ENCODE measurements at regions of chr7 and their contacts with region 1.

Region 1: DNA sequence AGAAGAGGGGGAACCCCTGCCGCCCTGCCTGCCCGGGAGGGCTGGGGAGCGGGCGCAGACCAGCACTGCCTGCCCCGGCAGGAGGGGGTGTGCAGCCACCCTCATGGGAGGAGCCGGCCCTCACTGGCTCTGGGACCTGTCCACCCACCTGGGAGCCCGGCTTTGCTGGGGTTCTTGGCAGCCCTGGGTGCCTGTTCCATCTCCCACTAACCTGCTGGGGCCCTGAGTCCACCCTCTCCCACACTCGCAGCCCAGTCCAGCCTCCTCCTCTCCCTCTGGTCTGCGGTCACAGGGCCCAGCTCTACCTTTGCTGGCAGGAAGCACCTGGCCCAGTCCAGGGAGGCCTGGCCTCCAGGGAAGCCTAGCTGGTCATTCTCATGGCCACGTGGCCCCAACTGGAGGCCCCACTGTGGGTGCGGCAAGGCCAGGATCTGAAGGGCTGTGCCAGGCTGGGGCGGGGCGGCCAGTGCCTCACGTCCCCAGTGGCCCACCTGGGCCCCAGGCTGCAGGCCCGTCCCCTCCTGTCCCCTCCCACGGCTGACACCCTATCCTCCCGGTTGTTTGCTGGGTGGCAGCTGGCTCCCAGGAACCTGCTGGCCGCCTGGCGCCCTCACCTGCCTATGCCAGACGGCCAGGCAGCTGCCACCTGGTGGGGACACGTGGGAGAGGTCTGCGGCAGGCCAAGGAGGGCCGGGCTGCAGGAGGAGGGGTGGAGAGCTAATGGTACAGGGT is at the start of gene TMEM184A:
- DNase-seq: peak; percentile 88
- H3K4me3 ChIP-seq: no peak within 1 kb of the TSS
- H3K27ac ChIP-seq: peak within 1 kb of the TSS in 1 of 2 experiments; percentile 16; a peak in 1 of 4 replicates
- H3K4me1 ChIP-seq: peaks cover 14% of the 10 kb centered on the region in 2 experiments; a peak in 3 of 4 replicates
- H3K27me3 ChIP-seq: no peaks in the 10 kb centered on the region
- CTCF ChIP-seq: peak; percentile 53
- EP300 ChIP-seq: no peak
- RAD21 ChIP-seq: peak; percentile 48
- polyA plus RNA-seq, gene TMEM184A: 1.5 and 1.8 TPM in 2 replicates

Region 2: DNA sequence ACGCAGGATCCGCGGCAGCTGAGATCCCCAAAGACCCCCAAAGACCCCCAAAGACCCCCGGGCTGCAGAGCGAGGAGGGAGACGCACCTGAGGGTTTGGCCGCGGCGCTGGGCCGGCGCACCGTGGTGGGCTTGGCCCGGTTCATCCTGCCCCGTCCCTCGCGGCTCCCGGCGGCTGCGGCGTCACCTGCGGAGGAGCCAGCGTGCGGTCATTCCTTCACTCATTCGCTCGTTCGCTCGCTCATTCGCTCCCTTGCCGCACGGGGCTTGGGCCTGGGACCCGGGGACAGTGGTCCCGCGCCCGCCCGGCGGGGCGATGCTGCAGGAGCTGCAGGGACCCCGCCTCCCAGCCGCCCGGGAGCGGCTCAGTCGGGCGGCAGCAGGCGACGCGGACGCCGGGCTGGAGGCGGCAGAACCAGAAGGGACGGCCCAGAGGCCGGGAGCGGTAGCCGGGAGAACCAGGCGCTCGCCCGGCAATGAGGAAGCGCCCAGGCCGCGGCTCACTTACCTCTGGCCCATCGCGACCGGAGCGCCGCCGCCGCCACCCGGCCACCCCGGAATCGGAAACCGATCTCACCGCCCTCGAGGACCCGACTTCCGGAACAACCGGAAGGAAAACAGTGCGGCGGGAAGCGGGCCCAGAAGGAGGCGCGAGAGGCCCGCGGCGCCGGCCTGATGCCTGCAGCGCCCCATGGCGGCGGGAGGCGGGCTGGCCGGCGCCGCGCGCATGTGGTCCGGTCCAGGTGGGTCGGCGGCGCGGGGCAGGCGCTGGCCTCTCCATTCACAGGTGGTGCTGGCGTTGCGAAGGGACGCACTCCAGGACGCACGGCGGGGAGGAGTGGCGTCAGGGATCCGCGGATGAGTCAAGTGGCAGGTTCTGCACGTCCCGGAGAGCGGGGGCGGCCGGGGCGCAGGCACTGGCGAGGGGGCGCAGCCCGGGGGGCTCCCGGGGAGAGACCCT is 51.9 kb before region 1 on chr7 and contains the start of gene INTS1:
- CTCF ChIA-PET with region 1: interaction called, 14 read pairs
- POLR2A ChIA-PET with region 1: no interaction called
- DNase-seq: peak; percentile 100
- H3K4me3 ChIP-seq: peak within 1 kb of the TSS; percentile 87 to 96
- H3K27ac ChIP-seq: peak within 1 kb of the TSS; percentile 50 to 72; a peak in 2 of 4 replicates
- H3K4me1 ChIP-seq: peaks cover 5 to 29% of the 10 kb centered on the region in 2 experiments; a peak in 2 of 4 replicates
- H3K27me3 ChIP-seq: no peaks in the 10 kb centered on the region
- CTCF ChIP-seq: peak; percentile 93
- EP300 ChIP-seq: peak; percentile 24 to 66; a peak in 2 of 4 replicates
- RAD21 ChIP-seq: peak; percentile 32; the same call in 1 of the 2 replicates
- polyA plus RNA-seq, gene INTS1: 35.7 and 48.1 TPM in 2 replicates

Region 3: DNA sequence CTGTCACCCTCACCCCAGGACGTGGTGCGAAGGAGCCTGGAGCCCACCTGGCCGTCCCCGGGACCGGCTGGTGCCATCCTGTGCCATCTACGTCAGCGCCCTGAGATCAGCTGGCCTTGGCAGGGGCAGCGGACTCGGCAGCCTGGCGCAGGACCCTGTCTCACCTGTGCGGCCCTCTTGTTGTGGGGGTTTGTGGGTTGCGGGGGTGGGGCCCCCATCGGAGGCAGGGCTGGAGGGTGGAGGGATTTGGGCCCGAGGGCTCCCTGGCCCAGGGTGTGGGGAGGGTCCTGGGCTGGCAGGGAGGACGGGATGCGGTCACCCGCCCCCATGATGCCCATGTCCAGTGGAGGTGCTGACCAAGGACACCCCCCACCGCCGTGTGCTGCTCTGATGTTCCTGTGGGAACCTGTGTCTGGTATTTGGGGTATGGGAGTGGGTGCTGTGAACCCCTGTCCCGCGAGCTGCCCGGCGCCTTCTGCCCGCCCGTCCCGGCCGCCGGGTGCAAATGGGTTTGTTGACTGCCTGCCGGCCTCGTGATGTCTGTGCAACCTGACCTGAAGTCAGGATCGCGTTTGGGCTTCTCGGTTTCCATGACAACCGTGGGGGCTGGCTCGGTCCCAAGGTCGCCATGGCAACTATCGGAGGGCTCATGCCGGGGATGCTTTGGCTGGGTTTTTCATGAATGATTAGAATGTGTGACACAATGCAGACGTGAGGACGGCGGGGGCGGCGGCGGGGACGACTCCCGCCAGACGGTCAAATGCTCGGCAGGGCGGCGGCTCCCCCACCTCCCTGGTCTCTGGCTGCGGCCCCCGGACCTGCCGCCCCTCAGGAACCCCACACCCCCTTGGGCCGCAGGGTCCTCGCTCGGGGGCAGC is 18.2 kb before region 1 on chr7:
- CTCF ChIA-PET with region 1: interaction called, 24 read pairs
- POLR2A ChIA-PET with region 1: no interaction called
- DNase-seq: peak; percentile 100
- H3K4me3 ChIP-seq: peak overlapping the region; percentile 51 to 64
- H3K27ac ChIP-seq: peak overlapping the region; percentile 77 to 100
- H3K4me1 ChIP-seq: peaks cover 35 to 45% of the 10 kb centered on the region in 2 experiments; a peak in 3 of 4 replicates
- H3K27me3 ChIP-seq: no peaks in the 10 kb centered on the region
- CTCF ChIP-seq: no peak
- EP300 ChIP-seq: peak in 1 of 2 experiments; percentile 66; a peak in 3 of 4 replicates
- RAD21 ChIP-seq: no peak

Region 4: DNA sequence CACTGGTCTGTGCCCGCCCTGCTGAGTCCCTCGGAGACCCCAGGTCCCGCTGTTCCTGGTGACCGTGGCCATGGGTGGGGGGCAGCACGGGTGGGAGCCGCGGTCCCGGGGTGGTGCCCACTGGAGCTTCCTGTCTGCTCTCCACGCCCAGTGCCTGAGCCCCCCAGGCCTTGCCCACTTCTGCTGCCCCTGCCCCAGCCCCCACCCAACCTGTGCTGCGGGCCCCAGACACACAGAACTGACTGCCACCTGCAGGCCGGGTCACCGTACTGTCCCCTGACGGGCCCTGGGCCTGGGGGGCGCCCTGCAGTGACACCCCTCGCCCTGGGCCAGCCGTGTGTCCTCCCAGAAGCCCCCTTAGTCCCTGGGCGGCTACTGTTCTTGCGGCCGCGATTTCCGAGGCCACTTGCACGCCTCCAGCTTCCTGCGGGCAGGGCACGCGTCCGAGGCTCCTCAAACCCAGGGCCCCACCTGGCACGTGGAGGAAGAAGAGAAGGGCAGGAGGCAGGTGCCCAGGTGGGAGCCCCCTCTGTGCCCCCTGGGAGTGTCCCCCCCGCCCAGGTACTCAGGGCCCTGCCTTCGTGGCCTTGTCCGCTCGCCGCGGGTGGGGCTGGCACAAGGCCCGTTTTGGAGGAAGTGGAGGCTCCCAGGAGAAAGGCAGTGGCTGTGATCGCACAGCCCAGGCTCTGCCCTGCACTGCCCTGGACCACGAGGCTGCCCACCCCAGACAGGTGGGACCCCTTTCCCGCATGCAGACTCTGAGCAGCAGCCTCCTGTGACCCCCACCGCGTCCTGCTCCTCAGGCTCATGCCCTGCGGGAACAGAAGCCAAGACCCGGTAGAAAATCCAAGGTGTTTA is 10.4 kb before region 1 on chr7:
- CTCF ChIA-PET with region 1: interaction called, 11 read pairs
- POLR2A ChIA-PET with region 1: interaction called, 3 read pairs
- DNase-seq: no peak
- H3K4me3 ChIP-seq: no peak overlapping the region
- H3K27ac ChIP-seq: no peak overlapping the region
- H3K4me1 ChIP-seq: no peaks in the 10 kb centered on the region
- H3K27me3 ChIP-seq: no peaks in the 10 kb centered on the region
- CTCF ChIP-seq: 0 out of 2 replicates have a peak, but pooled peaks have one; percentile 16
- EP300 ChIP-seq: no peak
- RAD21 ChIP-seq: no peak

Region 5: GRCh38 chr7:1770331-1770730 is 214.4 kb after region 1 on chr7:
- CTCF ChIA-PET with region 1: no interaction called
- POLR2A ChIA-PET with region 1: no interaction called
- DNase-seq: no peak
- H3K4me3 ChIP-seq: no peak overlapping the region
- H3K27ac ChIP-seq: no peak overlapping the region
- H3K4me1 ChIP-seq: no peaks in the 10 kb centered on the region
- H3K27me3 ChIP-seq: no peaks in the 10 kb centered on the region
- CTCF ChIP-seq: no peak
- EP300 ChIP-seq: no peak
- RAD21 ChIP-seq: no peak